Stomach (tissue), 19 donors: ENCODE measurements at regions of chr5 and their contacts with region 1.

Region 1: DNA sequence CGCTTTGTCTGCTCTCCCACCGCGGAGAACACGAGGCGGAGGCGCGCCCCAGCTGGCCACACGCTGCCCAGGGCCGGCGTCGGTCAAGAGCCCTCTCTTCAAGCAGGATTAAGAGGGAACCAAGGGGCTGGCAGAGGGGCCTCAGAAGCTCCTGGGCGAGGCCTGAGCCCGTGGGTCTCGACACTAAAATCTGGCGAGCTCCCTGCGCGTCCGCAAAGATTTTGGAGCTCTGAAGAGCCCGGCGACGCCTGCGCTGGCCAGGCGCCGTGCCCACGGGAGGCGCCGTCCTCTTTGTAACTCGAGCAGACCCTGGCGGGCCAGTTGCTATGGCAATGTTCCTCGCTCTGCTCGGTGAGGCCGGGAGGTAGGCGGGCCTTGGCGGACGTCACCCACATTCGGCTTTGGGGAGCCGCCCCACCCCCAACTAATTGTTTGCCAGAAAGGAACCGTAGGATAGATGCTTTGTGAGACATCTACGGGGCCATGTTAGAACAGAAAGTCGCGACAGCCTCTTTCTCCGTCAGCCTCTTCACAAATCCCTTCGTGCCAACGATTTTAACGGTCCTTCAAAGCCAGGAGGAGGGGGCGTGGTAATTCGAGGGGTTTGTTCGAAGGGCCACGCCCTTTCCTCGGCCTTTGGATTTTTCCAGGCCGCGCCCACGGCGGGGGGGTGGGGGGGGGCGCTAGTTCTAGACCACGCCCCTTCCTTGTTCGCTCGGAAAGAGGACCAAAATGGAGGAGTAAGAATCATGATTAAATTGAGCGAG is 714 bp upstream of the CNOT8 start:
- DNase-seq: peak; percentile 92 to 98
- H3K4me3 ChIP-seq: peak overlapping the region; percentile 67 to 82 (median 74)
- H3K27ac ChIP-seq: peak overlapping the region; percentile 97 to 99 (median 98)
- H3K4me1 ChIP-seq: peaks cover 33 to 48% (median 39%) of the 10 kb centered on the region in 4 donors
- H3K27me3 ChIP-seq: no peaks in the 10 kb centered on the region
- CTCF ChIP-seq: peak in 1 of 7 experiments; percentile 20
- EP300 ChIP-seq: no peak
- POLR2A ChIP-seq: peak in 1 of 4 donors; percentile 51

Region 2: GRCh38 chr5:154723740-154724505 is 133.8 kb before region 1 on chr5:
- intact Hi-C with region 1: no loop called
- DNase-seq: peak in 1 of 2 donors; percentile 50
- H3K4me3 ChIP-seq: no peak overlapping the region
- H3K27ac ChIP-seq: peak overlapping the region; percentile 27 to 63 (median 56)
- H3K4me1 ChIP-seq: peaks cover 12 to 21% (median 14%) of the 10 kb centered on the region in 4 donors
- H3K27me3 ChIP-seq: no peaks in the 10 kb centered on the region
- CTCF ChIP-seq: no peak
- EP300 ChIP-seq: no peak
- POLR2A ChIP-seq: no peak

Region 3: DNA sequence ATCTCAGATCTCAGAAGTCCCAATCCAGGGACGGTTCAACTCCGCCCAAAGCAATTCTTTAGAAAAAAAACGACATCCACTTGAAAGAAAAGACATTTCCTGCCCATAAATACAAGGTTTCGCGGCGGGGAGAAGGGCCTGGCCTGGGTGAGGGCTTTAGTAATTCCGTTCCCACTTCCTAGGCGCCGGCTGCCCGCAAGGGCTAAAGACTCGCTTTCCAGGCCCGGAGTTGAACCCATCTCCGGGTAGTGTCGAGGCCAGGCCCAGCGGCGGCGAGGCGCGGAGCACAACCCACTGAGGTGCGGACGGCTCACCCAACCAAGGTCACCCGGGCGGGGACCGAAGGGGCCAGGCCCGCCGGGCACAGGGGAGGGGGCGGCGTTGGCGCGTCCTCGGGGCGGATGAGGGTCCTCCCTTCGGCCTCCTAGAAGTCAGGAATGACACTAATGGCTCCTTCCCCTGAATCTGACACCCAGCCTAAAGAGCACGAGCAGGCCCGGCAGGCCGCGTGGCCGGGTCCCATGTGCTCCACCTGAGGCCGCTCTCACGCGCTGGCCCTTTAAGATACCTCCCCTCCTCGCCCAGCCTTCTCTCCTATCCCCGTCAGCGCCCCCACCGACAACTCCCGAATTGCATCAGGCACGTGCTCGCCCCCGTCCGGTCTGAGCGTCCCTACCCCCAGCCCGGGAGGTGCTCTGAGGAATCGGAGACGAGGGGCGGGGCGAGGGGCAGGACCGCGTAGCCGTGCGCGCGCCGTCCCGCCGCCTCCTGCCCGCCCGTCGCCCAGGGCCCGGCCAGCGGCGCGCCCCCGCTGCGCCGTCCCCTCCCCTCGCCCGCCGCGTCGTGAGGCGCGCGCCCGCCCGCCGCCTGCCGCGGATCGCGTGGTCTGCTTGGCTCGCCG is 103.0 kb before region 1 on chr5:
- intact Hi-C with region 1: loop called (anchors 5 kb)
- DNase-seq: peak; percentile 99 to 100
- H3K4me3 ChIP-seq: peak overlapping the region; percentile 88 to 99 (median 92)
- H3K27ac ChIP-seq: peak overlapping the region; percentile 95 to 99 (median 98)
- H3K4me1 ChIP-seq: peaks cover 37 to 45% (median 42%) of the 10 kb centered on the region in 4 donors
- H3K27me3 ChIP-seq: no peaks in the 10 kb centered on the region
- CTCF ChIP-seq: peak in 4 of 7 experiments; percentile 33 to 61 (median 48)
- EP300 ChIP-seq: no peak
- POLR2A ChIP-seq: no peak

Region 4: DNA sequence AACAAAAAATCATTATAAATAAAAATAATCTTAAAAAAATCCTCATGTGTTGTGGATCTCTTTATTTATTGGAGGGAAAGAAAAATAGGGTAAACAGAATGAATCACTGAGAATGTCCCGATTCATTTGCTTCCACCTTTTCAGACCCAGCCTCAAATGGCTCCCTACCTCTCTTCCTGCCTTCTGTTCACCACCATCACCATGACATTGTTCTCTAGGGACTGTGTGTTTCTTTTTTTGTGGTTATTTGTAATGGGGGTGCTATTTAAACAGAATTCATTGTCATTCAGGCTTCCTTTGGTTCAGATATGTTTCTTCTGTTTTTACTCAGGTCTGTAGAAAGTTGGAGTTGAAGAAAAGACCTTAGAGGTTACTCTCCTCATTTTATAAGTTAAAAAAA is 354.1 kb after region 1 on chr5:
- intact Hi-C with region 1: no loop called
- DNase-seq: no peak
- H3K4me3 ChIP-seq: no peak overlapping the region
- H3K27ac ChIP-seq: no peak overlapping the region
- H3K4me1 ChIP-seq: no peaks in the 10 kb centered on the region
- H3K27me3 ChIP-seq: no peaks in the 10 kb centered on the region
- CTCF ChIP-seq: no peak
- EP300 ChIP-seq: no peak
- POLR2A ChIP-seq: no peak